ENCODE measurements at regions of chr6 and their contacts with region 1.

Region 1: GRCh38 chr6:151330134-151330696 is 61.1 kb downstream of the ZBTB2 start:
- DNase-seq: no peak
- ATAC-seq: no peak
- H3K4me3 ChIP-seq: no peak overlapping the region
- H3K4me3 Mint-ChIP-seq: no peak overlapping the region
- H3K27ac ChIP-seq: no peak overlapping the region
- H3K27ac Mint-ChIP-seq: no peak overlapping the region
- H3K4me1 ChIP-seq: peaks cover under 1 to 12% of the 10 kb centered on the region in 2 experiments
- H3K4me1 Mint-ChIP-seq: peaks cover 9 to 12% (median 11%) of the 10 kb centered on the region in 3 donors
- H3K27me3 ChIP-seq: peaks cover 2 to 18% of the 10 kb centered on the region in 2 experiments
- H3K27me3 Mint-ChIP-seq: peaks cover 32 to 33% of the 10 kb centered on the region in 2 donors

Region 2: GRCh38 chr6:151087861-151088598 is 242.2 kb before region 1 on chr6:
- CTCF ChIA-PET with region 1: no interaction called
- POLR2A ChIA-PET with region 1: no interaction called
- DNase-seq: no peak
- ATAC-seq: no peak
- H3K4me3 ChIP-seq: no peak overlapping the region
- H3K4me3 Mint-ChIP-seq: no peak overlapping the region
- H3K27ac ChIP-seq: no peak overlapping the region
- H3K27ac Mint-ChIP-seq: no peak overlapping the region
- H3K4me1 ChIP-seq: no peaks in the 10 kb centered on the region
- H3K4me1 Mint-ChIP-seq: no peaks in the 10 kb centered on the region
- H3K27me3 ChIP-seq: no peaks in the 10 kb centered on the region
- H3K27me3 Mint-ChIP-seq: no peaks in the 10 kb centered on the region

Region 3: DNA sequence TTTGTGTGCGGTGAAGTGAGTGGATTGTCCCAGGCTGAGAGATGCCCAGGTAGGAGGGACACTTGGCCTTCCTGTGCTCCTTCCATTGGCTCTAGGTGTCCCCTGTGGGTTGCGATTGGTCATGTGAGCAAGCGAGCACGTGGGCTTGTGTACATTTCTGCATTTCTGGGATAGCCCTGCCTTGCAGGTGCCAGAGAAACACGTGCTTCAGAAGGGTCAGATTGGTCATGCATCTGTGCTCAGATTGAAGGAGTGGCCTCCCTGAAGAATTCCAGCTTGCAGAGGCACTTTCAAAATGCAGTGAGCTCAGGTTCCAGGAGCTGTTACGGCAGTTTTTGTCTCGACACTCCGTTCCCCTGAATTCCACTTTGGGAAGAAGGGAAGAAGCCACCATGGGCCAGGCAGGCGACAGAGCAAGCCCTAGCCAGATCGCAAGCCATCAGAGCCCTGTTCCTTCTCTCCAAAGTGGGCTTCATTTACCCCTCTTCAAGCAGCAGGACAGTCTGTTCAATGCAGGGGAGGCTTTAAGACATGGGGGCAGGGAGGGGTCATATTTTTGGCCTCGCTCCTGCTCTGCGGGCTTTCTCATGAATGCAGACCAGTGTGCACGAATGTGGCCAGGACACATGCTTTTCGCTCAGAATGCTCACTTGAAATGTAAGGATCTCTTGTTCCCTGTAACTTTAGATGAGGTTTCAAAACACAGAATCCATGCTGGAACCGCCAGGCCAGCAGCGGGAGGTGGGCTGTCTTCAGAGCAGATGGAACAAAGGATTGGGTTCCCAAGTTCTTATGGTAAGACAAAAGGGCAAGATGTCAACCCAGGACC is 169.1 kb before region 1 on chr6:
- CTCF ChIA-PET with region 1: interaction called, 3 to 10 read pairs
- POLR2A ChIA-PET with region 1: no interaction called
- DNase-seq: no peak
- ATAC-seq: no peak
- H3K4me3 ChIP-seq: no peak overlapping the region
- H3K4me3 Mint-ChIP-seq: no peak overlapping the region
- H3K27ac ChIP-seq: no peak overlapping the region
- H3K27ac Mint-ChIP-seq: no peak overlapping the region
- H3K4me1 ChIP-seq: no peaks in the 10 kb centered on the region
- H3K4me1 Mint-ChIP-seq: no peaks in the 10 kb centered on the region
- H3K27me3 ChIP-seq: peaks cover 0 to 6% of the 10 kb centered on the region in 2 experiments
- H3K27me3 Mint-ChIP-seq: peaks cover 2 to 6% of the 10 kb centered on the region in 2 donors

Region 4: DNA sequence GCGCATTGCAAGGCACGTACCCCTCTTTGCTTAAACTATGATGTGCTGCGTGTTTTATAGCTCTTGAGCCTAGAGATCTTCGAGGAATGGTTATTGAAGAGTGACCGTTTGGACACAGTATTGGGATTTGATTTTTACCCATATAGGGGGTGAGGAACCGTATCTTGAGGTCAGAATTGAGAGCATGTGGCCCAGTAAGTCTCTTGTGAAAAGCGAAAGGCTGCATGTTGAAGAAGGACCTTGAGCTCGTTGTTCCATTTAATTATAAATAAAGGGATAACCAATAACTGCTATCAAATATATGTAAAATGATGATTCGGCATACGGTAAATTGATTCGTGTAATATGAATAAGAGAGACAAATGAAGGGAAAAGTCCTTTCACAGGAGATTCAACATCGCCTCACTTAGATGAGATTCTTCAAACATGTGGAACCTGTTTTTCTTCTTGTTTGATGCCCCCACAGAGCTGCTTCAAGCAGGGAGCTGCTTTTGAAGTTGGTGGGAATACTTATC is 23.9 kb before region 1 on chr6:
- CTCF ChIA-PET with region 1: no interaction called
- POLR2A ChIA-PET with region 1: no interaction called
- DNase-seq: no peak
- ATAC-seq: no peak
- H3K4me3 ChIP-seq: no peak overlapping the region
- H3K4me3 Mint-ChIP-seq: no peak overlapping the region
- H3K27ac ChIP-seq: no peak overlapping the region
- H3K27ac Mint-ChIP-seq: no peak overlapping the region
- H3K4me1 ChIP-seq: no peaks in the 10 kb centered on the region
- H3K4me1 Mint-ChIP-seq: no peaks in the 10 kb centered on the region
- H3K27me3 ChIP-seq: peaks cover 0 to 9% of the 10 kb centered on the region in 2 experiments
- H3K27me3 Mint-ChIP-seq: peaks cover 9 to 12% of the 10 kb centered on the region in 2 donors

Region 5: GRCh38 chr6:151425561-151425960 is 95.3 kb after region 1 on chr6:
- CTCF ChIA-PET with region 1: no interaction called
- POLR2A ChIA-PET with region 1: no interaction called
- DNase-seq: no peak
- ATAC-seq: no peak
- H3K4me3 ChIP-seq: no peak overlapping the region
- H3K4me3 Mint-ChIP-seq: no peak overlapping the region
- H3K27ac ChIP-seq: no peak overlapping the region
- H3K27ac Mint-ChIP-seq: no peak overlapping the region
- H3K4me1 ChIP-seq: no peaks in the 10 kb centered on the region
- H3K4me1 Mint-ChIP-seq: no peaks in the 10 kb centered on the region
- H3K27me3 ChIP-seq: no peaks in the 10 kb centered on the region
- H3K27me3 Mint-ChIP-seq: no peaks in the 10 kb centered on the region